AG04450 (cell line): ENCODE measurements at regions of chr12 and their contacts with region 1.

Region 1: DNA sequence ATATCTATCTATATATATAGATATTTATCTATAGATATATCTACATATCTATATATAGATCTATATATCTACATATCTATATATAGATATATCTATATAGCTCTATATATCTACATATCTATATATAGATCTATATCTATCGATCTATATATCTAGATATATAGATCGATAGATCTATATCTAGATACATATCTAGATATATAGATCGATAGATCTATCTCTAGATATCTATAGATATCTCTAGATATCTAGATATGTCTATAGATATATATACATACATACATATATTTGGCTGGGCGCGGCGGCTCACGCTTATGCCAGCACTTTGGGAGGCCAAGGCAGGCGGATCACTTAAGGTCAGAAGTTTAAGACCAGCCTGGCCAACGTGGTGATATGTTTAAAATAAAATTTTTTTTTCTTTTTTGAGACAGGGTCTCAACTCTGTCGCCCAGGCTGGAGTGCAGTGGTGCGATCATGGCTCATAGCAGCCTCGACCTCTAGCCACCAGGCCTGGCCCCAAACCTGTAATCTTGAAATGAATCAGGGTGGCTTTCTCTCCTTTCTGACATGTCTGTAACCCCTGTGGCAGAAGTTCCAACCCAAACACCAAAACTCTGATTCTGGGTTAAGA is 18.1 kb downstream of the ARPC3 start:
- DNase-seq: no peak
- H3K4me3 ChIP-seq: no peak overlapping the region
- H3K27ac ChIP-seq: no peak overlapping the region
- H3K27me3 ChIP-seq: no peaks in the 10 kb centered on the region
- CTCF ChIP-seq: no peak

Region 2: DNA sequence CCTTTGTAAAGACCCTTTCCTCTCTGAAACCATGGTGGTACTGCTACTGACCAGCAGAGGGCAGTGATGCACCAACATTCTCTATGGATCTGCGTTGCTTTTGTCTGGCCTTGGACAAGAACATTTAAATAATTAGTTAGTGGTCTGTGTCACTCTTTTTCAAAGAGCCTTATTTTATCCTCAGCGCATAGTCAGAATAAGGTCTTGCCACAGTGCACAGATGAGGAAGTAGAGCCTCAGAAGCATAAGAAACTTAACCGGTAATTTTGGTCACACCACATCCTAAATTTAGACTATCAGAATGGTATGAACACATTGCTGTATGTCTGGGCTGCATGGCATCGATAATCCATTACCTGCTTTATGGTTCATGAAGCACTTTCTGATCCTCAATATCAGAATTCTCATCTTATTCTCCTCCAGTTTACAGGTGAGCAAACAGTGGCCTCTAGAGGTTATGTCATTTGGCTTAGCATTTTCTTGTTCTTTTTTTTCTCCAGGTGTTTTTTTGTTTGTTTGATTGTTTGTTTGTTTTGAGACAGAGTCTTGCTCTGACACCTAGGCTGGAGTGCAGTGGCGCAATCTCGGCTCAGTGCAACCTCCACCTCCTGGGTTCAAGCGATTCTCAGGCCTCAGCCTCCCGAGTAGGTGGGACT is 331.6 kb before region 1 on chr12:
- CTCF ChIA-PET with region 1: interaction called, 79 read pairs
- POLR2A ChIA-PET with region 1: interaction called, 5 read pairs
- DNase-seq: peak; percentile 55
- H3K4me3 ChIP-seq: no peak overlapping the region
- H3K27ac ChIP-seq: no peak overlapping the region
- H3K27me3 ChIP-seq: no peaks in the 10 kb centered on the region
- CTCF ChIP-seq: peak; percentile 93

Region 3: GRCh38 chr12:110349531-110350151 is 82.4 kb before region 1 on chr12:
- CTCF ChIA-PET with region 1: interaction called, 11 read pairs
- POLR2A ChIA-PET with region 1: interaction called, 4 read pairs
- DNase-seq: no peak
- H3K4me3 ChIP-seq: no peak overlapping the region
- H3K27ac ChIP-seq: peak overlapping the region; percentile 21
- H3K27me3 ChIP-seq: no peaks in the 10 kb centered on the region
- CTCF ChIP-seq: no peak

Region 4: GRCh38 chr12:110373025-110373424 is 59.0 kb before region 1 on chr12:
- CTCF ChIA-PET with region 1: interaction called, 12 read pairs
- POLR2A ChIA-PET with region 1: interaction called, 8 read pairs
- DNase-seq: no peak
- H3K4me3 ChIP-seq: no peak overlapping the region
- H3K27ac ChIP-seq: no peak overlapping the region
- H3K27me3 ChIP-seq: no peaks in the 10 kb centered on the region
- CTCF ChIP-seq: no peak

Region 5: DNA sequence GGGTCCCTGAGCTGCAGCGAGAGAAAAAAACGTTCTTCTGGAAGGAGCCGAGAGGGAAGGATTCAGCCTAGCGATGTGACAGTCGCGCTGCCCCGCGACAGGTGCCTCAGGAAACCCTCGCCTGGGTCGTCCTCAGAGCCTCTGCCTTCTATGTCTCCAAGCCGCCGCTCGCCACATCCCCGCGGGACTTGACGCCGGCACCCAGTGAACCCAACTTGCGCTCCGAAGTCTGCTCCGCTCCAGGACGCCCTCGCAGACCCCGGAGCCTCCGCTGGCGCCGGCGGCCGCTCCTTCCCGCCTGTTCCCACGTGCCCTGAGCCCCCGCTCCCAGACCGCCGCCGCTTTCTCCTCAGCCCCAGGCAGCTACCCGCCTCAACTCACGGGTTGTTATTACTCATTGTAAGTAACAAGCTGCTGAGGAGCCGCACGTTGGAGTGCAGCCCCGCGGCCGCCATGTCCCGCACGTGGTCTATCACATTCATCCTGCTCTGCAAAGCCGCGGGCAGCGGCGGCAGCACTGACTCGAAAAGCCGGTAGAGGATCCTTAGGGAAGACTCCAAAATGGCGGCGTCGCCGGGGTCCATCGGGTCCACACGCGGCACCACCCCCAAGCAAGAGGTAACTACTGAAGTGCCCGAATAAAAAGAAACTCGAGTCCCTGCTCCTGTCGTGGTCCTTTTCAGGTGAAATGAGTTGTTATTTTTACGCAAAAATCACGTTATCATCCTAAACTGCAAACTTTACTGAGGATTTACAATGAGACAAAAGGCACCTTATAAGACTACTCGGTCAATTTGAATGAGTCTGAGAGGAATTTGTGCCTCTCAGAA is 28.7 kb before region 1 on chr12 and contains the start of gene ANAPC7:
- CTCF ChIA-PET with region 1: interaction called, 14 read pairs
- POLR2A ChIA-PET with region 1: interaction called, 7 read pairs
- DNase-seq: peak; percentile 79
- H3K4me3 ChIP-seq: peak within 1 kb of the TSS; percentile 92
- H3K27ac ChIP-seq: peak within 1 kb of the TSS; percentile 81
- H3K27me3 ChIP-seq: no peaks in the 10 kb centered on the region
- CTCF ChIP-seq: no peak
- polyA plus RNA-seq, gene ANAPC7: 48.7 and 58.8 TPM in 2 replicates

Region 6: GRCh38 chr12:110444455-110444854 is 12.4 kb after region 1 on chr12:
- CTCF ChIA-PET with region 1: interaction called, 21 read pairs
- POLR2A ChIA-PET with region 1: interaction called, 6 read pairs
- DNase-seq: no peak
- H3K4me3 ChIP-seq: no peak overlapping the region
- H3K27ac ChIP-seq: no peak overlapping the region
- H3K27me3 ChIP-seq: no peaks in the 10 kb centered on the region
- CTCF ChIP-seq: no peak

Region 7: GRCh38 chr12:110468212-110469048 is 36.4 kb after region 1 on chr12 and contains the starts of genes FAM216A and GPN3:
- CTCF ChIA-PET with region 1: interaction called, 10 read pairs
- POLR2A ChIA-PET with region 1: interaction called, 5 read pairs
- DNase-seq: peak; percentile 96
- H3K4me3 ChIP-seq: peak within 1 kb of the TSS; percentile 98
- H3K27ac ChIP-seq: peak within 1 kb of the TSS; percentile 96
- H3K27me3 ChIP-seq: no peaks in the 10 kb centered on the region
- CTCF ChIP-seq: no peak
- polyA plus RNA-seq, gene FAM216A: 17.7 and 21.3 TPM in 2 replicates
- polyA plus RNA-seq, gene GPN3: 16.8 and 25.6 TPM in 2 replicates